AG04450 (cell line): ENCODE measurements at regions of chr20 and their contacts with region 1.

Region 1: GRCh38 chr20:20593447-20594170 is 118.8 kb downstream of the RALGAPA2 start:
- DNase-seq: peak; percentile 36
- H3K4me3 ChIP-seq: no peak overlapping the region
- H3K27ac ChIP-seq: no peak overlapping the region
- H3K27me3 ChIP-seq: no peaks in the 10 kb centered on the region
- CTCF ChIP-seq: peak; percentile 71

Region 2: DNA sequence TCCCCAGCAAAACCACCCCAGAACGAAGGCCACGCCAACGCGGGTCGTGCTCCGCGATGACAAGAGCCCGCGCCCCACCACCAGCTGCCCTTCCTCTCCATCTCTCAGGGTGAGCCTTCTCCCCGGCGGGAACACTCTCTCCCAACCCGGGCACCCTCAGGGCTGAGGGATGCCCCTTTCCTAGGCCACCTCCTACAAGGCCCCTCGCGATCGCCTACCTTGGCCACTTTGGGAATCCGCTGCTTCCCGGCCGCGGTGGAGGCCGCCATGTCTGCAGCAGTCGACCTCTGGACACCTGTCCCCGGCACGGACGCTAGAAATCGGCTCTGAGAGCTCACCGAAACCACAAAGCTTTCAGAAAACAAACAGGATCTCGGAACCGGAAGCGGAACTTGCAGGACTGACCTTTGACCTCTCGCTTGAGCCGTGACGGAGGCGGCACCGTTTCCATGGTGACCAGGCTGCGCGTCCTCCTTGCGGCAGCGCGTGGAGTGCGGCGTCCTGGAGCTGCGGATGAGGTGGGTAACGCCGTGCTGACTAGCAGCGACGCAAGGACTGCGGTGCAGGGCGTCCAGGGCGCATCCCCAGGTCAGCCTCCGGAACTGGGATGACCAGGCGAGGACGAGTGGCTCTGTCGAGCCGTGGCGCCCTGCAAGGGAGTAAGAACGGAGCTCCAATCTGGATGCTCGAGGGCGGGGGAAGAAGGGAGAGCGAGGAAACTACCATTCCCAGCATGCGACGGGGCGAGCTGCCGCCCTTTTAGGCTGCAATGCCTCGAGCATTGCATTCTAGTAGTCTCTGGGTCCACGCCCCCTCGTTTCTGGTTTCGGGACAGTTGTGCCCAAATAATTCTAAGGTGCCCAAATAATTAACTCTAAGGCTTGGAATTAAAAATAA is 541.3 kb before region 1 on chr20 and contains the starts of genes CFAP61 and CRNKL1:
- CTCF ChIA-PET with region 1: interaction called, 22 read pairs
- POLR2A ChIA-PET with region 1: no interaction called
- DNase-seq: peak; percentile 94
- H3K4me3 ChIP-seq: peak within 1 kb of the TSS; percentile 95
- H3K27ac ChIP-seq: peak within 1 kb of the TSS; percentile 73
- H3K27me3 ChIP-seq: peaks cover 5% of the 10 kb centered on the region
- CTCF ChIP-seq: no peak
- polyA plus RNA-seq, gene CFAP61: not detected in 2 replicates
- polyA plus RNA-seq, gene CRNKL1: 15.1 and 21.0 TPM in 2 replicates

Region 3: GRCh38 chr20:20083807-20084206 is 509.8 kb before region 1 on chr20:
- CTCF ChIA-PET with region 1: interaction called, 77 read pairs
- POLR2A ChIA-PET with region 1: no interaction called
- DNase-seq: no peak
- H3K4me3 ChIP-seq: no peak overlapping the region
- H3K27ac ChIP-seq: no peak overlapping the region
- H3K27me3 ChIP-seq: peaks cover 12% of the 10 kb centered on the region
- CTCF ChIP-seq: peak; percentile 46

Region 4: GRCh38 chr20:20369250-20370093 is 224.1 kb before region 1 on chr20:
- CTCF ChIA-PET with region 1: interaction called, 20 read pairs
- POLR2A ChIA-PET with region 1: no interaction called
- DNase-seq: no peak
- H3K4me3 ChIP-seq: no peak overlapping the region
- H3K27ac ChIP-seq: no peak overlapping the region
- H3K27me3 ChIP-seq: peaks cover 85% of the 10 kb centered on the region
- CTCF ChIP-seq: no peak

Region 5: GRCh38 chr20:20568604-20569205 is 24.9 kb before region 1 on chr20:
- CTCF ChIA-PET with region 1: interaction called, 27 read pairs
- POLR2A ChIA-PET with region 1: interaction called, 3 read pairs
- DNase-seq: no peak
- H3K4me3 ChIP-seq: no peak overlapping the region
- H3K27ac ChIP-seq: no peak overlapping the region
- H3K27me3 ChIP-seq: no peaks in the 10 kb centered on the region
- CTCF ChIP-seq: peak; percentile 85

Region 6: GRCh38 chr20:20611167-20611566 is 17.6 kb after region 1 on chr20:
- CTCF ChIA-PET with region 1: interaction called, 26 read pairs
- POLR2A ChIA-PET with region 1: no interaction called
- DNase-seq: no peak
- H3K4me3 ChIP-seq: no peak overlapping the region
- H3K27ac ChIP-seq: no peak overlapping the region
- H3K27me3 ChIP-seq: no peaks in the 10 kb centered on the region
- CTCF ChIP-seq: no peak

Region 7: GRCh38 chr20:20761301-20761700 is 167.7 kb after region 1 on chr20:
- CTCF ChIA-PET with region 1: no interaction called
- POLR2A ChIA-PET with region 1: no interaction called
- DNase-seq: no peak
- H3K4me3 ChIP-seq: no peak overlapping the region
- H3K27ac ChIP-seq: no peak overlapping the region
- H3K27me3 ChIP-seq: no peaks in the 10 kb centered on the region
- CTCF ChIP-seq: no peak